Spleen (tissue), 13 donors: ENCODE measurements at regions of chr14 and their contacts with region 1.

Region 1: DNA sequence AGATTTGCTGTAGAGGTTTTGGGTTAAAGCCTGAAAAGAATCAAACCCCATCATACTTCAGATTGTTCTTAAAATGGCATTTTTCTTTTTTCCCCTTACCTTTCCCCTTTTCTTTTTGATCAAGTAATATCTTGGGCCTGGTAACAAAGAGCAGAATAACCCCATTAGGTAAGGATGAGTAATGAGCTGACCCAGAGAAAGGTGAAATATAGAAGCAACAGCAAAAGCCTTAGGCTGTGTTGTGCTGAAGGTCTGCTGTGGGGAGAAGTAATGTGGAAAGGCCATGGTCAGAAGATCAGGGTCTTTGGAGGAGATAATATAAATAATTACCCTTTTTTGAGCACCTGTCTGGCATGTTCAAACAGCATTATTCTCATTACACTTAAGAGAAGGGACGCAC is 42.3 kb downstream of the MIA2 start:
- DNase-seq: no peak
- H3K4me3 ChIP-seq: no peak overlapping the region
- H3K27ac ChIP-seq: no peak overlapping the region
- H3K4me1 ChIP-seq: peaks cover 0 to 58% (median 4%) of the 10 kb centered on the region in 6 donors
- H3K27me3 ChIP-seq: no peaks in the 10 kb centered on the region
- CTCF ChIP-seq: no peak
- POLR2A ChIP-seq: no peak

Region 2: DNA sequence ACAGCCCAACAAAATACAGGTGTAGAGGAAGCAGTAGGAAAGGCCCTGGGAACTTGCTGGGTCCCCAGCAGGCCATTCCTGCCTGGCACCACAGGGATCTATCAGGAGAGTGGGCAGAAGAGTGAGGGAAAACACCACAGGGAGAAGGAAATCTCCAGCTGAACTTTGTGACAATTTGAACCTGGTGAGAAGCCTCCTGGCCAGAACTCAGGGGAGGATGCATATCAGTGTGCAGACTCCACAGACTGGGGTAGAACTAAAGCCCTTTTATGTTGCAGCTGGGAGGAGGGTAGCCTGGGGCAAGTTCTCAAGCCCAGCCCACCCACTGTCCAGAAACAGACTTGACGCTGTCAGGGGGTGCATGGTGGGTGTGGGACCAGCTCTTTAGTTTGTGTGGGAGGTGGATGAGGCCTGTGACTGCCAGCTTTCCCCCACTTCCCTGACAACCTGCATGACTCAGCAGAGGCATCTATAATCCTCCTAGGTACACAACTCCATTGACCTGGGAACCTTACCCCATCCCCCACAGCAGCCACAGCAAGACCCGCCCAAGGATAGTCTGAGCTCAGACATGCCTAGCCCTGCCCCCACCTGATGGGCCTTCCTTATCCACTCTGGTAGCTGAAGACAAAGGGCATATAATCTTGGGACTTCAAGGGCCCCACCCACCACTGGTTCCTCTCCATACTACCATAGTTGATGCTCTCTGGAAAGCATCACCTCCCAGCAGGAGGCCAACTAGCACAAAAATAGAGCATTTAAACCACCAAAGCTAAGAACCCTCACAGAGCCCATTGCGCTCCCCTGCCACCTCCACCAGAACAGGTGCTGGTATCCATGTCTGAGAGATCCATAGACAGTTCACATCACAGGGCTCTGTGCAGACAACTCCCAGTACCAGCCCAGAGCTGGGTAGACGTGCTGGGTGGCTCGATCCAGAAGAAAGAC is 72.1 kb before region 1 on chr14:
- intact Hi-C with region 1: loop called (anchors 10 kb)
- DNase-seq: no peak
- H3K4me3 ChIP-seq: no peak overlapping the region
- H3K27ac ChIP-seq: no peak overlapping the region
- H3K4me1 ChIP-seq: no peaks in the 10 kb centered on the region
- H3K27me3 ChIP-seq: no peaks in the 10 kb centered on the region
- CTCF ChIP-seq: no peak
- POLR2A ChIP-seq: no peak